GM12878 (cell line): ENCODE measurements at regions of chr10 and their contacts with region 1.

Region 1: GRCh38 chr10:119207367-119207668 is at the start of gene GRK5:
- DNase-seq: peak; percentile 86
- ATAC-seq: peak; percentile 85
- H3K4me3 ChIP-seq: peak within 1 kb of the TSS; percentile 80
- H3K27ac ChIP-seq: peak within 1 kb of the TSS; percentile 85
- H3K4me1 ChIP-seq: peaks cover 11% of the 10 kb centered on the region
- H3K27me3 ChIP-seq: no peaks in the 10 kb centered on the region
- CTCF ChIP-seq: no peak
- EP300 ChIP-seq: no peak
- POLR2A ChIP-seq: peak; percentile 84
- RAD21 ChIP-seq: no peak
- polyA plus RNA-seq, gene GRK5: 0.11 to 0.86 TPM

Region 2: GRCh38 chr10:119217991-119218490 is 10.7 kb after region 1 on chr10:
- CTCF ChIA-PET with region 1: interaction called, 23 read pairs
- POLR2A ChIA-PET with region 1: no interaction called
- RAD21 ChIA-PET with region 1: interaction called, 5 read pairs
- SMC1A ChIA-PET with region 1: interaction called, 4 read pairs
- in situ Hi-C with region 1: no loop called
- intact Hi-C with region 1: no loop called
- DNase-seq: no peak
- ATAC-seq: no peak
- H3K4me3 ChIP-seq: no peak overlapping the region
- H3K27ac ChIP-seq: no peak overlapping the region
- H3K4me1 ChIP-seq: peaks cover 10% of the 10 kb centered on the region
- H3K27me3 ChIP-seq: no peaks in the 10 kb centered on the region
- CTCF ChIP-seq: no peak
- EP300 ChIP-seq: no peak
- POLR2A ChIP-seq: no peak
- RAD21 ChIP-seq: no peak

Region 3: GRCh38 chr10:119253433-119254174 is 46.3 kb after region 1 on chr10:
- CTCF ChIA-PET with region 1: no interaction called
- POLR2A ChIA-PET with region 1: no interaction called
- RAD21 ChIA-PET with region 1: no interaction called
- SMC1A ChIA-PET with region 1: no interaction called
- in situ Hi-C with region 1: no loop called
- intact Hi-C with region 1: no loop called
- DNase-seq: no peak
- ATAC-seq: no peak
- H3K4me3 ChIP-seq: no peak overlapping the region
- H3K27ac ChIP-seq: no peak overlapping the region
- H3K4me1 ChIP-seq: no peaks in the 10 kb centered on the region
- H3K27me3 ChIP-seq: no peaks in the 10 kb centered on the region
- CTCF ChIP-seq: no peak
- EP300 ChIP-seq: no peak
- POLR2A ChIP-seq: no peak
- RAD21 ChIP-seq: no peak

Region 4: DNA sequence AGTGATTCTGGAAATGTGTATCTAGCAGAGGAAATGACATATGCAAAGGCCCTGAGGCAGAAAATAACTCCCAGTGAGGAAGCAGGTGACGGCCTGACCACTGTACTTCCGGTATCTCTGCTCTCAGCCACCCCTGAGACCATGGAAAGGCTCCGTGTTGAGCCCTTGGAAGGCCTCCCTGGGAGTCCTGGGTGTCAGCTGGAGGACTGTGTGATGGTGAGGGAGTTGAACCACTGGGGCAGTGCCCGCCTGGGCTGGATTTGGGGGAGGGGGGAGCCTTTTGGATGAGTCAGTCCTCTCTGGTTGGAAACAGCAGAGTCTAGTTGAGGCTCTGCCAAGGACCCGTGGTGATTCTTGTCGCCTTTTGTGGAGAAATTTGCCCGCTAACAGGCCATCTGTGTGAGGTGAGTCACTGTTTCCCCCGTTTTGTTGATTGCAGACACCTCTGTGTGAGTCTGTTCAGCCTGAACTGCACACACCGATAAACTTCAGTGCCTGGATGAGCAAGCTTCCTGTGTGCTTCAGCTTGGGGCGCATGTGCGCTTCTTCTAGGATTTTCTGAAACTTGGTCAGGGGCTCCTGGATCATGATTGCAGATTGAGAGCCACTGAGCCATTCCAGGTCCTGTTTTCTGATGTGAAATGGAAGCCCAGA is 98.7 kb after region 1 on chr10:
- CTCF ChIA-PET with region 1: interaction called, 43 read pairs
- POLR2A ChIA-PET with region 1: interaction called, 11 read pairs
- RAD21 ChIA-PET with region 1: interaction called, 46 read pairs
- SMC1A ChIA-PET with region 1: interaction called, 28 read pairs
- in situ Hi-C with region 1: no loop called
- intact Hi-C with region 1: loop called (anchors 2 kb)
- DNase-seq: peak; percentile 81
- ATAC-seq: peak; percentile 85
- H3K4me3 ChIP-seq: peak overlapping the region; percentile 69
- H3K27ac ChIP-seq: peak overlapping the region; percentile 92
- H3K4me1 ChIP-seq: peaks cover 78% of the 10 kb centered on the region
- H3K27me3 ChIP-seq: no peaks in the 10 kb centered on the region
- CTCF ChIP-seq: no peak
- EP300 ChIP-seq: peak; percentile 22 to 29; a peak in 1 of 4 replicates
- POLR2A ChIP-seq: peak; percentile 65
- RAD21 ChIP-seq: 0 out of 2 replicates have a peak, but pooled peaks have one; percentile 5

Region 5: GRCh38 chr10:119445311-119445934 is 238.1 kb after region 1 on chr10:
- CTCF ChIA-PET with region 1: interaction called, 89 read pairs
- POLR2A ChIA-PET with region 1: no interaction called
- RAD21 ChIA-PET with region 1: interaction called, 13 read pairs
- SMC1A ChIA-PET with region 1: interaction called, 22 read pairs
- in situ Hi-C with region 1: no loop called
- intact Hi-C with region 1: loop called (anchors 1 kb)
- DNase-seq: no peak
- ATAC-seq: peak; percentile 89
- H3K4me3 ChIP-seq: no peak overlapping the region
- H3K27ac ChIP-seq: no peak overlapping the region
- H3K4me1 ChIP-seq: peaks cover 14% of the 10 kb centered on the region
- H3K27me3 ChIP-seq: no peaks in the 10 kb centered on the region
- CTCF ChIP-seq: peak; percentile 86 to 92 (median 89)
- EP300 ChIP-seq: no peak
- POLR2A ChIP-seq: no peak
- RAD21 ChIP-seq: peak; percentile 78

Region 6: GRCh38 chr10:119596537-119597404 is 389.5 kb after region 1 on chr10 and contains the start of gene TIAL1:
- CTCF ChIA-PET with region 1: no interaction called
- POLR2A ChIA-PET with region 1: interaction called, 3 read pairs
- RAD21 ChIA-PET with region 1: interaction called, 5 read pairs
- SMC1A ChIA-PET with region 1: no interaction called
- in situ Hi-C with region 1: no loop called
- intact Hi-C with region 1: loop called (anchors 5 kb)
- DNase-seq: peak; percentile 98
- ATAC-seq: peak; percentile 86
- H3K4me3 ChIP-seq: peak within 1 kb of the TSS; percentile 83
- H3K27ac ChIP-seq: peak within 1 kb of the TSS; percentile 97
- H3K4me1 ChIP-seq: peaks cover 7% of the 10 kb centered on the region; the same call in 1 of the 2 replicates
- H3K27me3 ChIP-seq: no peaks in the 10 kb centered on the region
- CTCF ChIP-seq: no peak
- EP300 ChIP-seq: no peak
- POLR2A ChIP-seq: peak; percentile 81
- RAD21 ChIP-seq: no peak
- polyA plus RNA-seq, gene TIAL1: 26.0 to 68.2 TPM